Posterior vena cava (tissue), 2 donors: ENCODE measurements at regions of chr5 and their contacts with region 1.

Region 1: GRCh38 chr5:157718519-157718918 is 12.7 kb upstream of the THG1L start:
- DNase-seq: no peak

Region 2: DNA sequence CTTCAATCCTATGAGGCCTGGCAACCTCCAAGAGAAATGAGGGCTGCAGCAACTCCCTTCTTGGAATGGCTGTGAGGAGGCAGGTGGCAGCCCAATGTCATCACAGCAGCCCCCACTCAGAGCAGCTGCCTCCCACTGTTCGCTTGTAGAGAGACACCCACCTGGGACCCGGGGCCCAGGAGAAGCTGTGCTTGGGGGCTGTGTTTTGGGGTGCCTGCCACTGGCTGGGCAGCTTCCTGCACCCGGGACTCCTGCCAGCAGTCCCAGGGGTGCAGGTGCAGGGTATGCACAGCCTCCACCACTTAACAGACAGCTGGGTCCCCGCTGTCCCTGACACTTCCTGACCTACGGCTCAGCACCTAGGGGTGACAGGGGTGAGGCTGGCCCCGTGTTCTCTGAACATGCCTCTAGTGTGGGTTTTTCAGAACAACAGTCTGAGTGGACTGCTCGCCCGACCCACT is 232.3 kb before region 1 on chr5:
- intact Hi-C with region 1: loop called in 1 of 2 experiments (anchors 10 kb)
- DNase-seq: no peak